CD8-positive, alpha-beta T cell (primary cell): ENCODE measurements at regions of chr11 and their contacts with region 1.

Region 1: DNA sequence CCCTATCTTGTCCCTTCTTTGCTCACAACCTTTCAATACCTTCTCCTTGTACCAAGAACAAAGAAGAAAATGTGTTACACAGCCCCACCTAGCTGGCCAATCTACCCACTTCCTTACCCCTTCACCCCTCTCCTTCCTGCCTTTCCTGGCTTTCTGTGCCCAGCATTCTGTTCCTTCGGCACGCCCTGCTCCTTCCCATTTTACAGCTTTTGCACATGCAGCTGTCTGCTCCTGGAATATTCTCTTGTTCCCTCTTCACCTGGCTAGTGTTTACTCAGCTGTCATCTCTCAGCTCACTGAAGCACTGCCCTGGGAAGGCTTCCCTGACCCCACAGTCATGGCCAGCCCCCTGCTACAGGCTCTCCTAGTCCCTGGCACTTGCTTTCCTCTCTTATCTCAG is 30.7 kb downstream of the SERPINH1 start:
- DNase-seq: peak in 2 of 9 experiments; percentile 29 to 44
- ATAC-seq: no peak
- H3K4me3 ChIP-seq: no peak overlapping the region
- H3K4me3 Mint-ChIP-seq: no peak overlapping the region
- H3K27ac ChIP-seq: no peak overlapping the region
- H3K27ac Mint-ChIP-seq: no peak overlapping the region
- H3K4me1 ChIP-seq: no peaks in the 10 kb centered on the region
- H3K4me1 Mint-ChIP-seq: peaks cover 12% of the 10 kb centered on the region
- H3K27me3 ChIP-seq: no peaks in the 10 kb centered on the region
- H3K27me3 Mint-ChIP-seq: no peaks in the 10 kb centered on the region
- CTCF ChIP-seq: no peak

Region 2: DNA sequence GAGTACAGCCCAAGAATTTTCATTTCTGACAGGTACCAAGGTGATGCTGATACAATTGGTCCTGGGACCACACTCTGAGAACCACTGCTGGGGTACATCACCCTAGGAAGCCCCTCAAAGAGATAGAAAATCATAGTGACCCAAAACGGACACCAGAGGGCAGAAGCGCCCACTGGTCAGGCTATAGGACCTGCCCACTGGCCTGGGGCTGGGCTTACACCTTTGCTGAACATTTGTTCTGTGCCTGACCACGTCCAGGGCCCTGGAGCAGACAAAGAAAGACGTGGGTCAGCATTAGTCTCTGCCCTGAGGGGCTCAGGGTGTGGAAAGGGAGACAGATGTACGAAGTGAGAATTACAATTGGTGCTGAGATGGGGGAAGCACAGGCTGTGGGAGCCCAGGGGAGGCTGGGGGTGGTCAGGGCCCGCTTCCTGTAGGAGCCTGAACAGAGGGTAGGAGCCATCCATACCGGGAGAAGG is 45.1 kb before region 1 on chr11:
- CTCF ChIA-PET with region 1: interaction called, 10 read pairs
- POLR2A ChIA-PET with region 1: no interaction called
- intact Hi-C with region 1: loop called (anchors 1 to 2 kb)
- DNase-seq: peak in 5 of 9 experiments; percentile 28 to 63 (median 56)
- ATAC-seq: peak; percentile 54
- H3K4me3 ChIP-seq: no peak overlapping the region
- H3K4me3 Mint-ChIP-seq: no peak overlapping the region
- H3K27ac ChIP-seq: no peak overlapping the region
- H3K27ac Mint-ChIP-seq: no peak overlapping the region
- H3K4me1 ChIP-seq: no peaks in the 10 kb centered on the region
- H3K4me1 Mint-ChIP-seq: peaks cover 2% of the 10 kb centered on the region
- H3K27me3 ChIP-seq: peaks cover 0 to 3% of the 10 kb centered on the region in 2 experiments
- H3K27me3 Mint-ChIP-seq: peaks cover 4% of the 10 kb centered on the region
- CTCF ChIP-seq: peak; percentile 80

Region 3: GRCh38 chr11:75577207-75577606 is 15.5 kb before region 1 on chr11:
- CTCF ChIA-PET with region 1: interaction called, 12 read pairs
- POLR2A ChIA-PET with region 1: no interaction called
- intact Hi-C with region 1: no loop called
- DNase-seq: peak; percentile 33 to 74 (median 67)
- ATAC-seq: peak; percentile 77
- H3K4me3 ChIP-seq: no peak overlapping the region
- H3K4me3 Mint-ChIP-seq: no peak overlapping the region
- H3K27ac ChIP-seq: no peak overlapping the region
- H3K27ac Mint-ChIP-seq: no peak overlapping the region
- H3K4me1 ChIP-seq: peaks cover 6% of the 10 kb centered on the region
- H3K4me1 Mint-ChIP-seq: peaks cover 7% of the 10 kb centered on the region
- H3K27me3 ChIP-seq: no peaks in the 10 kb centered on the region
- H3K27me3 Mint-ChIP-seq: no peaks in the 10 kb centered on the region
- CTCF ChIP-seq: peak; percentile 65